ENCODE measurements at regions of chr12 and their contacts with region 1.

Region 1: GRCh38 chr12:52082988-52083637 is 3.6 kb downstream of the SMIM41 start:
- DNase-seq: peak; percentile 35
- H3K4me3 Mint-ChIP-seq: no peak overlapping the region
- H3K27ac Mint-ChIP-seq: no peak overlapping the region
- H3K4me1 Mint-ChIP-seq: no peaks in the 10 kb centered on the region
- H3K27me3 Mint-ChIP-seq: peaks cover 16% of the 10 kb centered on the region

Region 2: GRCh38 chr12:51994959-51995358 is 88.2 kb before region 1 on chr12:
- intact Hi-C with region 1: loop called (anchors 1 kb)
- DNase-seq: no peak
- H3K4me3 Mint-ChIP-seq: no peak overlapping the region
- H3K27ac Mint-ChIP-seq: no peak overlapping the region
- H3K4me1 Mint-ChIP-seq: peaks cover 14% of the 10 kb centered on the region
- H3K27me3 Mint-ChIP-seq: no peaks in the 10 kb centered on the region

Region 3: GRCh38 chr12:52050761-52051541 is 32.2 kb before region 1 on chr12 and contains the start of gene NR4A1:
- intact Hi-C with region 1: loop called (anchors 1 kb)
- DNase-seq: peak; percentile 96
- H3K4me3 Mint-ChIP-seq: peak within 1 kb of the TSS; percentile 96
- H3K27ac Mint-ChIP-seq: peak within 1 kb of the TSS; percentile 92
- H3K4me1 Mint-ChIP-seq: peaks cover 42% of the 10 kb centered on the region
- H3K27me3 Mint-ChIP-seq: no peaks in the 10 kb centered on the region
- total RNA-seq, gene NR4A1: 52.7 and 60.3 TPM in 2 replicates

Region 4: GRCh38 chr12:52069327-52070184 is 13.6 kb before region 1 on chr12 and contains the start of gene ATG101:
- intact Hi-C with region 1: loop called (anchors 1 kb)
- DNase-seq: peak; percentile 84
- H3K4me3 Mint-ChIP-seq: peak within 1 kb of the TSS; percentile 96
- H3K27ac Mint-ChIP-seq: peak within 1 kb of the TSS; percentile 99
- H3K4me1 Mint-ChIP-seq: peaks cover 54% of the 10 kb centered on the region
- H3K27me3 Mint-ChIP-seq: peaks cover 2% of the 10 kb centered on the region
- total RNA-seq, gene ATG101: 56.2 and 63.3 TPM in 2 replicates

Region 5: DNA sequence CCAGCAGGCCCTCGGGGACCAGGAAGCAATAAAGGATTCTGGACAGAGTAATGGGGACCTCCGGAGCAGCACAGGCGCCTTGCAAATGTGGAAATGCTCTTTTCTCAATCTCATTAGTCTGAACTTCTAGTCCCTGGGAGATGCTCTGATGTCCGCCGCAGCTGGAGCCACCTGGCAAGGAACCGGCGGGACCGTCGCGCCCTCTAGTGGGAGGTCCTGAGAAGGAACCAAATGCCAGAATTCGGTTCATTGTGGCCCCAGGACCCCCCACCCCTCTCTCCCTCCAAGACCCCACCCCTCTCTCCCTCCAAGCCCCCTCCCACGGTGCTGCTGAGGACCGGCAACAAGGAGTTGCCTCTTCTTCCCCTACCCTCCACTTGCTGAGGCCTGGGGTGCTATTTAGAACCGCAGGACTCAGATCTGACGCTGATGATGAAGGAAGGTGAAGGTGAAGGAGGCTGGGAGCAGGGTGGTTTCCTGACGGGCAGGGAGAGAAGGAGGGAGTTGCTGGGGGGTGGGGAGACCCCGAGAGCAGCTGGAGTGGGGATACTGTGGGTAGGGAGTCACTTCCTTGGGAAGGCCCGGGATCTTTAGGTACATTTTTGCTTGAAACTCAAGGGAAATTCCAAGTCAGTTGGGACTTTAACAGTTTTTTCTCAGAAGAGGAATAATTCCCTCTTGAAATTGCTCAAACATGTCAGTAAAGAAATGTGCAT is 38.9 kb after region 1 on chr12:
- intact Hi-C with region 1: loop called (anchors 5 kb)
- DNase-seq: peak; percentile 50
- H3K4me3 Mint-ChIP-seq: no peak overlapping the region
- H3K27ac Mint-ChIP-seq: no peak overlapping the region
- H3K4me1 Mint-ChIP-seq: peaks cover 29% of the 10 kb centered on the region
- H3K27me3 Mint-ChIP-seq: peaks cover 17% of the 10 kb centered on the region

Measured in activated T-helper 1 cell treated with anti-CD3 and anti-CD28 coated beads, Interleukin-12 subunit alpha, Interleukin-12 subunit beta, Interleukin-2, Interleukin-4 antibody, amounts not matched to agents 30 ng/mL and 10 ng/mL and 1 ng/mL, durations not matched to agents 14 hours and 24 hours and 36 hours (primary cell).